Colonic mucosa (tissue), 4 donors: ENCODE measurements at regions of chr19 and their contacts with region 1.

Region 1: DNA sequence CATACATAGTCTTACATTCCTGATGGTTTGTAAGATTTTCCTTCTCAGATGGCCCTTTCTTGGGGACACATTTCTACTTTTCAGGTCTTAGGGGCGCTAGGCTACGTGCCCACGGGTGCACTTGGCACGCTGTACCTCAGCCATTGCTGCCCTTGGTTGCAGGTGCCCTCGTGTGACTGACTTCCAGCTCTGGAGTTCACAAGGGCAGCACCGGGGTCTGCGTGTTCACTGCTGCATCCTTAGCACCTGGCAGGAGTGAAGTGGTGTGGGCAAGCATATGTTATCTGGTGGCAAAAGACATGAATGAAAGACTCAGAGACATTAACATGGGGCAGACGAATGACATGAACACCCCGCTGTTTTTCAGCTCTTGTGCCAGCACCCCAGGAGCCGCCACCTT is 13.3 kb upstream of the WDR88 start:
- DNase-seq: no peak
- H3K4me3 ChIP-seq: no peak overlapping the region
- H3K27ac ChIP-seq: no peak overlapping the region
- H3K4me1 ChIP-seq: no peaks in the 10 kb centered on the region
- H3K27me3 ChIP-seq: no peaks in the 10 kb centered on the region
- CTCF ChIP-seq: no peak

Region 2: GRCh38 chr19:32976208-32976805 is 142.3 kb before region 1 on chr19:
- intact Hi-C with region 1: loop called (anchors 5 kb)
- DNase-seq: peak; percentile 88
- H3K4me3 ChIP-seq: no peak overlapping the region
- H3K27ac ChIP-seq: peak overlapping the region; percentile 69
- H3K4me1 ChIP-seq: peaks cover 3% of the 10 kb centered on the region
- H3K27me3 ChIP-seq: no peaks in the 10 kb centered on the region
- CTCF ChIP-seq: peak; percentile 66